ENCODE measurements at regions of chr2 and their contacts with region 1.

Region 1: DNA sequence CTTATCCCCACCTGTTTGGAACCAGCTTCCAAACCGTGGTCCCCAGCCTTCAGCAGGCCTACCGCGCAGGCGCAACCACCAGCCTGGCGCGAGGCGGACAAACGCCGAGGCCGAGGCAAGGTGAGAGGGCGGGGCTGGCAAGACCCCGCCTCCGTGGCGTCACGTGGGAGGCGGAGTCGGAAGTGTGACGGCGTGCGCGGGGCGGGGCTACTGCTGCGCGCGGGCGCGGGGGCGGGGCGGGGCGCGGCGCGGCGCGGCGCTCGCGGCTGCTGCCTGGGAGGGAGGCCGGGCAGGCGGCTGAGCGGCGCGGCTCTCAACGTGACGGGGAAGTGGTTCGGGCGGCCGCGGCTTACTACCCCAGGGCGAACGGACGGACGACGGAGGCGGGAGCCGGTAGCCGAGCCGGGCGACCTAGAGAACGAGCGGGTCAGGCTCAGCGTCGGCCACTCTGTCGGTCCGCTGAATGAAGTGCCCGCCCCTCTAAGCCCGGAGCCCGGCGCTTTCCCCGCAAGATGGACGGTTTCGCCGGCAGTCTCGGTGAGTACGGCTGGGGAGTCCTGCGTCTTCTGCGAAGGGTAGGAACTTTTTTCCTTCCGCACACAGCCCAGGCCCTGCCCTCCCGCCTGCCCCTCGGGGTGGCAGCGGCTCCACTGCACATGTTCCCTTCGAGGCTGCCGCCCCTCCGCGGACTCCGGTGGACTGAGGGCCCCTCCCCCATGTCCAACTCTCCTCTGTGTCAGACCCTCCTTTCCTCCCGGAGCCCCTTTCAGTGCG is at the start of gene EML4:
- DNase-seq: peak; percentile 91 to 97 (median 92)
- ATAC-seq: peak; percentile 97 to 98 (median 98)
- H3K4me3 ChIP-seq: peak within 1 kb of the TSS; percentile 57 to 96 (median 85)
- H3K27ac ChIP-seq: peak within 1 kb of the TSS in 11 of 12 donors; percentile 77 to 93 (median 87)
- H3K4me1 ChIP-seq: peaks cover 0 to 46% (median 25%) of the 10 kb centered on the region in 12 donors
- H3K27me3 ChIP-seq: no peaks in the 10 kb centered on the region
- CTCF ChIP-seq: no peak
- POLR2A ChIP-seq: peak in 1 of 2 donors; percentile 68
- total RNA-seq, gene EML4: 3.5 to 32.8 (median 5.7) TPM

Region 2: DNA sequence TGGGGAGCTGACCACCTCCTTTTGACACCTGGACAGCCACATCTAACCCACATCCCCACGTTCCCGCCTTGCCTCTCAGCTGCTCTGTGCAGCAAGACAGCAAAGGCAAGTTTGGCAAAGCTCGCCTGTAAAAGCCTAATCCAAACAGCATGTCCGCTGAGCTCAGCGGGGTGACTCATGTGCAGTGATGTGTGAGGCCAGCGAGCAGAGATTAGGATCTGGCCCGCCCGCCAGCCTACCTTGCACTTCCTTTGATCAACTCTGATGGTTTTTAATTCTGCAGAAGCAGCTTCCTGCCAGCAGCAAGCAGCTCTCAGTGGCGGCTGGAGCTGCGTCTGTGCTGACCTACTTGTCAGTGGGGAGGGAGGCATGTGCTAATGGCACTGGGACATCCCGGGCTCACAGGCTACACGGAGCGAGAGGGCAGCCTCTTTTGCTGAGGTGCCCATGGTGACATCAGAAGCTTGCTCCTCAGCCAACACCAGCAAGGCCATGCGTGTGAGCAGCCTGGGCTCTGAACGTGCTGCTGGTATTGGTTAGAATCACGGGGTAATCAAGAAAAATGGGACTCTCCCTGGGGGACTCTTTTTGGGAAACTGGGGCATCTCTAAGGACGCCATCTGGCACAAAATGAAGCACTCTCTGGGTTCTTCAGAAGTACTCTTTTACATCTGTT is 36.2 kb before region 1 on chr2:
- intact Hi-C with region 1: loop called in 2 of 10 experiments (anchors 5 kb)
- DNase-seq: peak; percentile 82 to 90 (median 84)
- ATAC-seq: peak; percentile 85 to 95 (median 93)
- H3K4me3 ChIP-seq: peak overlapping the region in 7 of 12 donors; percentile 8 to 37 (median 28)
- H3K27ac ChIP-seq: peak overlapping the region in 11 of 12 donors; percentile 7 to 84 (median 53)
- H3K4me1 ChIP-seq: peaks cover 0 to 79% (median 32%) of the 10 kb centered on the region in 12 donors
- H3K27me3 ChIP-seq: no peaks in the 10 kb centered on the region
- CTCF ChIP-seq: no peak
- POLR2A ChIP-seq: no peak

Region 3: GRCh38 chr2:42141687-42142546 is 27.4 kb before region 1 on chr2:
- intact Hi-C with region 1: loop called in 2 of 10 experiments (anchors 2 kb)
- DNase-seq: peak; percentile 65 to 88 (median 79)
- ATAC-seq: peak; percentile 85 to 94 (median 86)
- H3K4me3 ChIP-seq: peak overlapping the region in 9 of 12 donors; percentile 5 to 33 (median 25)
- H3K27ac ChIP-seq: peak overlapping the region; percentile 61 to 94 (median 86)
- H3K4me1 ChIP-seq: peaks cover 0 to 64% (median 46%) of the 10 kb centered on the region in 12 donors
- H3K27me3 ChIP-seq: no peaks in the 10 kb centered on the region
- CTCF ChIP-seq: no peak
- POLR2A ChIP-seq: no peak

Region 4: GRCh38 chr2:42192652-42193566 is 23.6 kb after region 1 on chr2:
- intact Hi-C with region 1: no loop called
- DNase-seq: no peak
- ATAC-seq: no peak
- H3K4me3 ChIP-seq: no peak overlapping the region
- H3K27ac ChIP-seq: no peak overlapping the region
- H3K4me1 ChIP-seq: peaks cover 0 to 46% (median 9%) of the 10 kb centered on the region in 12 donors
- H3K27me3 ChIP-seq: no peaks in the 10 kb centered on the region
- CTCF ChIP-seq: no peak
- POLR2A ChIP-seq: no peak

Region 5: GRCh38 chr2:42223855-42224268 is 54.6 kb after region 1 on chr2:
- intact Hi-C with region 1: no loop called
- DNase-seq: no peak
- ATAC-seq: no peak
- H3K4me3 ChIP-seq: no peak overlapping the region
- H3K27ac ChIP-seq: peak overlapping the region in 2 of 12 donors; percentile 7 to 8
- H3K4me1 ChIP-seq: peaks cover 0 to 25% (median 14%) of the 10 kb centered on the region in 12 donors
- H3K27me3 ChIP-seq: no peaks in the 10 kb centered on the region
- CTCF ChIP-seq: no peak
- POLR2A ChIP-seq: no peak